ENCODE measurements at regions of chr19 and their contacts with region 1.

Region 1: DNA sequence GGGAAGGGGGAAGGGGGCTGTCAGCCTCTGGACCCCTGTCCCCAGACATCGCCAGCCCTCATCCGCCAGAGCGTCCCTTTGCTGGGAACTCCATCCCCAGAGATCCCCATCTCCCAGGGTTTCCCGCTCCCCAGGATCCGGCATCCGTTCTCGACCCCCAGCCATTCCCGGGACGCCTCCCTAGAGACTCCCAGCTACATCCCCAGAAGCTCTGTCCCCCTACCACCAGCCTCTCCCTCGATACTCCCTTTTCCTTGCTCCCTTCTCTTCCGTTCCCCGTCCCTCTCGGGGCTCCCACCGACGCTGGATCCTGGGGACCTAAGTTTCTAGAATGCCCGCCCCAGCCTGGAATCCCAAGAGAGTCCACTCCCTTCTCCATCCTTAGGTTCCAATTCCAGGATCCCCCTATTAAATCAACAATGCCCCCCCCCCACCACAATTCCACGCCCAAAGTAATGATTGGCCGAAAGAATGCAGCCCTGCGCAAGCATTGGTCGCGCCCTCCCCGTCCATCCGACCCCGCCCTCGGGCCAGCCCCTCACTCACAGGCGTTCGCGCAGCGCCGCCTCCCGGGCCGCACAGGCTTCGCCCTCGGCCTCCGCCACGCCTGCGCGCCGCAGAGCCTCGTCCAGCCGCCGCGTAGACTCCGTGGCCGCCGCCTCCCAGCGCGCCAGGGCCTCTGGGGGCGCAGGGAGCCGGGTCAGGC is 3.2 kb downstream of the CCDC194 start:
- DNase-seq: peak; percentile 52
- H3K4me3 ChIP-seq: peak overlapping the region; percentile 62
- H3K27me3 ChIP-seq: peaks cover 2% of the 10 kb centered on the region; the same call in 1 of the 2 replicates
- CTCF ChIP-seq: peak; percentile 63

Region 2: GRCh38 chr19:17305517-17306284 is 85.1 kb before region 1 on chr19 and contains the start of gene MRPL34:
- CTCF ChIA-PET with region 1: interaction called, 16 read pairs
- POLR2A ChIA-PET with region 1: interaction called, 3 read pairs
- DNase-seq: peak; percentile 94
- H3K4me3 ChIP-seq: peak within 1 kb of the TSS; percentile 79
- H3K27me3 ChIP-seq: no peaks in the 10 kb centered on the region
- CTCF ChIP-seq: peak; percentile 92
- polyA plus RNA-seq, gene MRPL34: 19.9 and 26.3 TPM in 2 replicates

Region 3: DNA sequence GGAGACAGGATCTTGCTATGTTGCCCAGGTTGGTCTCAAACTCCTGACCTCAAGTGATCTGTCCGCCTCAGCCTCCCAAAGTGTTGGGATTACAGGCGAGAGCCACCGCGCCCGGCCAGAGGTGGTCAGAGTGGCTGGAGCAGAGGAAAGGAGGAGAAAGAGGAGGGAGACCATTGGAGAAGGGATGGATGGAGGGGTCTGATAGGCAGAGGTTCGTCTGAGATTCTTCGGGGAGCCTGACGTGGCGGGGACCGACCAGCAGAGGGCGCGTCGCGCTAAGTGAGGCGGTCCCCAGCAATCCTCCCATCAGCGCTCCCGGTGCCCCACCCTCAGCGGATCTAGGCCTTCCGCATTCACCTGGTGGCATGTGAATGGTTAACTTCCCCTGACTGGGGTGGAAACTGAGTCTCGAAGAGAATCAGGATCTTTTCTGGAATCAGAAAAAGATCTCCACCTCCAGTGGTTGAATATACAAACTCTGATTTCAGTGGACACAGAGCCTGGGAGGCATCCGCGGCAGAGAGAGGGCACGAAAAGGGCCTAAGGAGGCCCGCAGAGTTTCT is 44.6 kb before region 1 on chr19:
- CTCF ChIA-PET with region 1: interaction called, 121 read pairs
- POLR2A ChIA-PET with region 1: no interaction called
- DNase-seq: no peak
- H3K4me3 ChIP-seq: no peak overlapping the region
- H3K27me3 ChIP-seq: no peaks in the 10 kb centered on the region
- CTCF ChIP-seq: peak; percentile 94

Region 4: DNA sequence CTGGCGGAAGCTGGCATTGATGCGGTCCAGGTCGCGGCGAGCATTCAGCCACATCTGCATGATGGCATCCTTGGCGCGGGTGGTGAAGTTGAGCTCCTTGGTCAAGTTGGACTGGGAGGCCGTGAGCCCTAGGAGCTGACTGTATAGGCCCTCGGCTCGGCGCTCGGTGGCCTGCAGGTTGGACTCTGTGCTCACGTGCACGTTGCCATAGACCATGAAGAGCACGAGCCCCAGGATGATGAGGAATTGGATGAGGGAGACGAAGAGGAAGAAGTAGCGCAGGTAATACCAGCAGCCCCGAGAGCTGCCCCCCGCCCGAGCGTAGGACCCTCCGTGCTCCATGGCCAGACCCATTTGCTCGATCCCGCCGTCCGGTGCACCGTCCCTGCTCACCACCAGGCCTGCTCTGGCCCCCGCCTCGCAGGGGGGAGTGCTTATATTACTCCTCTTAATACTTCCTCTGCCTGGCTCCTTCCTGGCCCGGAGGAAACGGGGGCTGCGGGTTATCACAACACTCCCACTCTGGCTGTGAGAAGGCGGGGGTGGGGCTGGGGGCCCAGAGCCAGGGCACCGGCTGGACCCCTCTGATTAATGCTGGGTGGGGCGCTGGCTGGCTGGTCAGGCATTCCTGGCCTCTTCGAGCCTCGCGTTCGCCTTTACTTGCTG is 13.8 kb before region 1 on chr19 and contains the start of gene PLVAP:
- CTCF ChIA-PET with region 1: interaction called, 15 read pairs
- POLR2A ChIA-PET with region 1: no interaction called
- DNase-seq: no peak
- H3K4me3 ChIP-seq: no peak within 1 kb of the TSS
- H3K27me3 ChIP-seq: no peaks in the 10 kb centered on the region
- CTCF ChIP-seq: no peak
- polyA plus RNA-seq, gene PLVAP: not detected in 2 replicates

Region 5: DNA sequence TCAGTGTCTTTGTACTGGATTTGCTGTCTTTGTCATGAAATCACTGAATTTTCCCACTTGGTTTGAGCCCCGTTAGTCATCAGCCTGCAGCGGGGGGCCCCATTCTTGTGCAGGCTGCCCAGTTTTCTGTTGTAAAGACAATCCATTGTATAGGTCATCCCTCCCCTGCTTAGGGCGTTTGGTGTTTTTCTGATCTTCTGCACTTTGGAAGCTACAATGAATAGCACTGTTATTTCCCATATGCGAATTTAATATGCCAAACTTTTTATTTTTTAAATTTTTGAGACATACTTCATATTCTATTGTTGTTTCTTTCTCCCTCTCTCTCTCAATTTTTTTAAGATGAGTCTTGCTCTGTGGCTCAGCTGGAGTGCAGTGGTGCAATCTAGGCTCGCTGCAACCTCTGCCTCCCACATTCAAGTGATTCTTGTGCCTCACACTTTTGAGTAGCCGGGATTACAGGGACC is 88.5 kb after region 1 on chr19:
- CTCF ChIA-PET with region 1: no interaction called
- POLR2A ChIA-PET with region 1: no interaction called
- DNase-seq: no peak
- H3K4me3 ChIP-seq: no peak overlapping the region
- H3K27me3 ChIP-seq: no peaks in the 10 kb centered on the region
- CTCF ChIP-seq: no peak